CD8-positive, alpha-beta T cell (primary cell): ENCODE measurements at regions of chr10 and their contacts with region 1.

Region 1: DNA sequence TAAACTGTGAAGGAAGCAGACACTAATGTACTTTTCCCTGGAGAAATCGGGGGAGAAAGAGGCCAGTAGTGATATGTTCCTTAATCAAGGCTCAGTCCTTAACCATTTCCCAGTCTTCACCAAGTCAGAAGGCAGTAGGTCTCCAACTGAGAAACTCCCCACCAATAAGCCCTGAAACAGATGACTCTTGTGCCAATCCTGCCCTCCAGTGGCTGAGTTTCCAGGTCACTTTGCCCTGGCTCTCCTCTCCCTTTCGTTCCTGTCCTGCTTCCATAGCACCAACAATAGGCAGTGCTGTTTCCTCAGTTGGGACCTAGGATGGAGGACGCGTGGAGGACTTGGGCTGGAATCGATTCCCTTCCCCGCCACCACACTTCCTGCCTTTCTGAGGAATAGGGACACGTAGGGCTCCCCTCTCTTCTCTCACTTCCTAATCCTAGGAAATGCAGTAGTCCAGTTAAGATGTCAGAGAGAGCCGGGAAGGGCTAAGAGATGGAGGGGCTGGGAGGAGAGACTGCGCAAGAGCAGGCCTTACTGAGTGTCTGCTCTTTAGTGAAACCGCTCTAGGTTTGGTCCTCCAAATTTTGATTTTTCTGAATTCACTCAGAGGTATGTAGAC is 23.4 kb downstream of the ATOH7 start:
- DNase-seq: peak in 2 of 9 experiments; percentile 6 to 20
- ATAC-seq: no peak
- H3K4me3 ChIP-seq: no peak overlapping the region
- H3K4me3 Mint-ChIP-seq: no peak overlapping the region
- H3K27ac ChIP-seq: no peak overlapping the region
- H3K27ac Mint-ChIP-seq: no peak overlapping the region
- H3K4me1 ChIP-seq: no peaks in the 10 kb centered on the region
- H3K4me1 Mint-ChIP-seq: no peaks in the 10 kb centered on the region
- H3K27me3 ChIP-seq: no peaks in the 10 kb centered on the region
- H3K27me3 Mint-ChIP-seq: peaks cover 22% of the 10 kb centered on the region
- CTCF ChIP-seq: no peak

Region 2: GRCh38 chr10:68223535-68224165 is 15.1 kb after region 1 on chr10:
- CTCF ChIA-PET with region 1: interaction called, 11 read pairs
- POLR2A ChIA-PET with region 1: no interaction called
- intact Hi-C with region 1: no loop called
- DNase-seq: no peak
- ATAC-seq: no peak
- H3K4me3 ChIP-seq: no peak overlapping the region
- H3K4me3 Mint-ChIP-seq: no peak overlapping the region
- H3K27ac ChIP-seq: no peak overlapping the region
- H3K27ac Mint-ChIP-seq: no peak overlapping the region
- H3K4me1 ChIP-seq: no peaks in the 10 kb centered on the region
- H3K4me1 Mint-ChIP-seq: no peaks in the 10 kb centered on the region
- H3K27me3 ChIP-seq: no peaks in the 10 kb centered on the region
- H3K27me3 Mint-ChIP-seq: peaks cover 7% of the 10 kb centered on the region
- CTCF ChIP-seq: no peak

Region 3: DNA sequence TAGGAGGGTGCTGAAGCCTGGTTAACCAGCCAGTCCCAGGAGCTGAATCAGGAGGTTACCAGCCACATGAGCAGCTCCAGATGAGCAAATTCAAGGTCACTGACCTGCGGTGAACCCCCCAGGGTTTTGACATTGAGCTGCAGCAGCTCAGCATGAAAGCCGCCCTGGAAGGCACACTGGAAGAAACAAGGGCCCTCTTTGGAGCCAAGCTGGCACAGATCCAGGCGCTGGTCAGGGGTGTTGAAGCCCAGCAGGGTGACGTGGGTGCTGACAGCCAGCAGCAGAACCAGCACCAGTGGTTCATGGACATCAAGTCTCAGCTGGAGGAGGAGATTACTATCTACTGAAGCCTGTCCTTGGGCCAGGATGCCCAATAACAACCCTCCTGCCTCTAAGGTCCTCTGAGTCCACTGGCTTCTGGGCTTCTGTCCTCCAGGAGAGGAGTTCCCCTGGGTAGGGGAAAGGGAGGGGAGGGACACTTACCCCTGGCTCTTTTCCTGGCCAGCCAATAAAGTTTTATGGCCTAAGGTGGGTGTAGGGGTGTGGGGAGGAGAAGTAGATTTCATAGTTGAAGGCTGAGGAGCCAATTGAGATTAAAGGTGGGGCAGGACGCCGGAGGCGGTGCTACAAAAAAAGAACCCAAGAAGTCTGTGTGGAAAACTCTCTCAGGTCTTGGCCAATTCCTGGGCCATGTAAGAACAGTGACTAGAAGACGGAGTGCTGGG is 52.8 kb after region 1 on chr10:
- CTCF ChIA-PET with region 1: no interaction called
- POLR2A ChIA-PET with region 1: no interaction called
- intact Hi-C with region 1: no loop called
- DNase-seq: no peak
- ATAC-seq: no peak
- H3K4me3 ChIP-seq: no peak overlapping the region
- H3K4me3 Mint-ChIP-seq: no peak overlapping the region
- H3K27ac ChIP-seq: no peak overlapping the region
- H3K27ac Mint-ChIP-seq: no peak overlapping the region
- H3K4me1 ChIP-seq: no peaks in the 10 kb centered on the region
- H3K4me1 Mint-ChIP-seq: no peaks in the 10 kb centered on the region
- H3K27me3 ChIP-seq: no peaks in the 10 kb centered on the region
- H3K27me3 Mint-ChIP-seq: peaks cover 4% of the 10 kb centered on the region
- CTCF ChIP-seq: no peak

Region 4: DNA sequence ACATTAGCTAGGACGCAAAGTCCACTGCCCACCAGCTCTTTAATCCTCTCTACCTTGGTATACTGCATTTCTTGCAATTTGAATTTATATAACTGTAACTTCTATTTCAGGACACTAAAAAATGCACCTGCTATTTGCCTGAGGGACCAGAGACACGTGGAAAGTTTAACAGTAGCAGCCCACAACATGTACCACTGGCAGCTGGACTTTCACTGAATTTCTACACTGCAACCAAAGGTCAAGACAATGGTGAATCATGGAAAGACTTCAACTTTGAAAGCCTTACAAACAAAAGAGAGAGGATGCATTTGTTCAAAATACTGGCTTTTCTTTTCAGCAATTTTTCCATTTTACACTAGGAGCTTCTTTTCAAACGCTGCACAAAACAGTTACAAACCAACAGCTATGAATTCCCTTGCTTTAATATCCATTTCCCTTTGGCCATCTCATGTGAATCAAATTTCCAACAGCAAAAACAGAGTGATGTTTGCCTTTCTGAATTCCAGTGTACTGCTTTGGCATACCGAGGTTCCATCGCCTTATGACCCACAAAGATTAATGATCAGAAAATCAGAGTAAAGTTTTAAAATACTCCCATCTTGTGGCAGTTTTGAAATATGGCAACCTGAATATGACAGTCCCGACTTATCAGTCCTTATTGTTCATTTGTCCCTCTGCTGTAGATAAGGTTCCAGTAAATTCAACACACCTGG is 93.4 kb after region 1 on chr10:
- CTCF ChIA-PET with region 1: interaction called, 14 read pairs
- POLR2A ChIA-PET with region 1: no interaction called
- intact Hi-C with region 1: loop called (anchors 2 to 5 kb)
- DNase-seq: peak in 2 of 9 experiments; percentile 37 to 50
- ATAC-seq: peak; percentile 36
- H3K4me3 ChIP-seq: no peak overlapping the region
- H3K4me3 Mint-ChIP-seq: no peak overlapping the region
- H3K27ac ChIP-seq: no peak overlapping the region
- H3K27ac Mint-ChIP-seq: no peak overlapping the region
- H3K4me1 ChIP-seq: no peaks in the 10 kb centered on the region
- H3K4me1 Mint-ChIP-seq: no peaks in the 10 kb centered on the region
- H3K27me3 ChIP-seq: no peaks in the 10 kb centered on the region
- H3K27me3 Mint-ChIP-seq: no peaks in the 10 kb centered on the region
- CTCF ChIP-seq: peak; percentile 56

Region 5: DNA sequence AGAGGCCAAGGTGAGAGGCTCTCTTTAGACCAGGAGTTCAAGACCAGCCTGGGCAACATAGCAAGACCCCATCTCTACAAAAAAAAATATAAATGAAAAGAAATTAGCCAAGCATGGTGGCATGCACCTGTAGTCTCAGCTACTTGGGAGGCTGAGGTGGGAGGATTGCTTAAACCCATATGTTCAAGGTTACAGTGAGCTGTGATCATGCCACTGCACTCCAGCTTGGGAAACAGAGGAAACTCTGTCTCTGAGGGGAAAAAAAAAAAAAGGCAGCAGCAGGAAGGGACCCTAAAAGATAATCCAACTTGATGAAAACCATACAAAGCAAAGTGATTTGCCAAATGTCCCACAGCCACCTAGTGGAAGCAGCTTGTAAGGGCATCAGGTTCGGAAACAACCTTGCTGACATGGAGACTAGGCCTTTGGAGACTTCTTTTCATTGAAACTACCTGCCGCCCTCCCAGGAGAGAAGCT is 139.8 kb after region 1 on chr10:
- CTCF ChIA-PET with region 1: interaction called, 33 read pairs
- POLR2A ChIA-PET with region 1: no interaction called
- intact Hi-C with region 1: loop called (anchors 1 to 2 kb)
- DNase-seq: peak in 8 of 9 experiments; percentile 6 to 76 (median 46)
- ATAC-seq: peak; percentile 90
- H3K4me3 ChIP-seq: no peak overlapping the region
- H3K4me3 Mint-ChIP-seq: no peak overlapping the region
- H3K27ac ChIP-seq: peak overlapping the region in 1 of 2 experiments; percentile 33
- H3K27ac Mint-ChIP-seq: peak overlapping the region; percentile 76
- H3K4me1 ChIP-seq: no peaks in the 10 kb centered on the region
- H3K4me1 Mint-ChIP-seq: peaks cover 6% of the 10 kb centered on the region
- H3K27me3 ChIP-seq: no peaks in the 10 kb centered on the region
- H3K27me3 Mint-ChIP-seq: no peaks in the 10 kb centered on the region
- CTCF ChIP-seq: peak; percentile 79